Aorta (tissue), 5 donors: ENCODE measurements at regions of chr3 and their contacts with region 1.

Region 1: GRCh38 chr3:39288300-39288808 is 8.5 kb upstream of the CX3CR1 start:
- DNase-seq: peak; percentile 84 to 88
- ATAC-seq: peak; percentile 91
- H3K4me3 ChIP-seq: no peak overlapping the region
- H3K27ac ChIP-seq: no peak overlapping the region
- H3K4me1 ChIP-seq: no peaks in the 10 kb centered on the region
- H3K27me3 ChIP-seq: no peaks in the 10 kb centered on the region

Region 2: DNA sequence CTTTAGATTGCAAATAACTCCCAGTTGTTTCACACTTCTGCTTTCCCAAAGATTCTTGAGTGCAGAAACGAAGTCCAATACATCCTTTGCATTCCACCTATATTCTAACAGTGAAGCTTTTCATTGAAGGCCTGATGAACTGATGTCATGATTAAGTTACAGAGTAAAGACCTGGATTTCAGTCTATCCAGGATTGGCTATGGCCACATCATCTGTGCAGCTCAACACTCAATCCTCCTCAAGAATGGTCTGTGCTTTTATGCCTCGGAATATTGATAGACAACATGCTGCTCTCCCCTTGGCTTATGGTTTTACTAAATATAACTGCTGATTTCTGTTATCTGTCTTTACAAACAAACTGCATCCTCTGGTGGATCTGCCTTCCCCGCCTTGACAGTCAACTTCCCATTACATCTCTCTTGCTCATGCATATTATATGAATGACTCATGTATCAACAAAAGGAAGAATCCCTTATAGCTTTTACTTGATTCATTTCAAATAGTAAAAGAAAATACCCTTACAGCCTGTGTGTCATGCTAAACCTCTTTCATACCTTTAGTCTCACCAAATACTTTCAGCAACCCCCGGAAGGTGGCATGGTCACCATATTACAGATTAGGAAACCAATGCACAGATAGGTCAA is 296.1 kb before region 1 on chr3:
- intact Hi-C with region 1: no loop called
- DNase-seq: no peak
- ATAC-seq: no peak
- H3K4me3 ChIP-seq: no peak overlapping the region
- H3K27ac ChIP-seq: no peak overlapping the region
- H3K4me1 ChIP-seq: no peaks in the 10 kb centered on the region
- H3K27me3 ChIP-seq: no peaks in the 10 kb centered on the region

Region 3: GRCh38 chr3:39101022-39101689 is 187.2 kb before region 1 on chr3:
- intact Hi-C with region 1: loop called (anchors 5 kb)
- DNase-seq: no peak
- ATAC-seq: peak; percentile 38
- H3K4me3 ChIP-seq: no peak overlapping the region
- H3K27ac ChIP-seq: no peak overlapping the region
- H3K4me1 ChIP-seq: no peaks in the 10 kb centered on the region
- H3K27me3 ChIP-seq: no peaks in the 10 kb centered on the region

Region 4: GRCh38 chr3:39107388-39108199 is 180.8 kb before region 1 on chr3 and contains the starts of genes GORASP1 and TTC21A:
- intact Hi-C with region 1: loop called (anchors 5 kb)
- DNase-seq: peak; percentile 95 to 96
- ATAC-seq: peak; percentile 95
- H3K4me3 ChIP-seq: peak within 1 kb of the TSS; percentile 71 to 86
- H3K27ac ChIP-seq: peak within 1 kb of the TSS; percentile 50 to 51
- H3K4me1 ChIP-seq: no peaks in the 10 kb centered on the region
- H3K27me3 ChIP-seq: no peaks in the 10 kb centered on the region
- total RNA-seq, gene GORASP1: 52.3 to 62.2 TPM
- total RNA-seq, gene TTC21A: 3.6 to 11.6 TPM

Region 5: GRCh38 chr3:39126532-39127071 is 161.8 kb before region 1 on chr3:
- intact Hi-C with region 1: loop called (anchors 2 kb)
- DNase-seq: no peak
- ATAC-seq: peak; percentile 67
- H3K4me3 ChIP-seq: no peak overlapping the region
- H3K27ac ChIP-seq: peak overlapping the region in 1 of 2 donors; percentile 8
- H3K4me1 ChIP-seq: no peaks in the 10 kb centered on the region
- H3K27me3 ChIP-seq: no peaks in the 10 kb centered on the region

Region 6: DNA sequence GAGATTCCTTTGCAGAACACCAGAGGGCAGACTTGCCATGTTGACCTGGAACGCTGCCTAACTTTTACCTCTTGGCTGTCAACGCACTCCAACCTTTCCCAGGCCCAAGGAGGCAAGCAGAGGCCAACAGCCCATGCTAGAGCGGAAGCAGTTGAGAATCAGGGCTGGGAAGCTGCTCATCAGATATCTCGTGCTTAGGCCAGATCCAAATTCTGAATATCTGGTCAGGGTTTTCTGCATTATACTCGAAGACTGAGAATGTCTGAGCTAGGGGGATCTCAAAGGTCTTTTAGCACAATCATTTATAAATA is 98.4 kb before region 1 on chr3:
- intact Hi-C with region 1: loop called (anchors 2 to 5 kb)
- DNase-seq: no peak
- ATAC-seq: peak; percentile 72
- H3K4me3 ChIP-seq: no peak overlapping the region
- H3K27ac ChIP-seq: no peak overlapping the region
- H3K4me1 ChIP-seq: no peaks in the 10 kb centered on the region
- H3K27me3 ChIP-seq: no peaks in the 10 kb centered on the region

Region 7: DNA sequence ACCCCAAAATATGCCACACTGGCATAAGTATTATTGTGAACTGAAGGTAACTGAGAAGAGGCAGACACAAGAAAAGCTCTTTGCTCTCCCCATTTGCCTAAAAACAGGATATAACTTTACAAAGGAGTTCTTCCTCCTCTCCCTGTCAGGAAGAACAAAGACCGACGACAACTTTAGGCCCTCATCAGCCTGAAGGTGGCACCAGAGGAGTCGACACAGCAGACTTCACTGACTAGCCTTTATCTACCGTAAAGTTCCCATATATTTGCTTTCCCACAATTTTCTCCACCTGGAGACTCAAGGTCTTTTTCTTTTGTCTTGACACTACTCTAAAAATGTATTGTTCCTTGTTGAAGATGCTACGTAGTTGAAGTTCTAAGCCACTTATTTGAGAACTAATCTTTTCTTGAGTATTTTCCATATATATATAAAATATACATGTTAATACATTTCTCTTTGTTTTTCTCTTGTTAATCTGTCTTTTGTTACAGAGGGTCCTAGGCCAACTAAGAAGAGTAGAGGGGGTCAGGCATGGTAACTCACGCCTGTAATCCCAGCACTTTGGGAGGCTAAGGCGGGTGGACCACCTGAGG is 79.8 kb before region 1 on chr3:
- intact Hi-C with region 1: loop called in 1 of 2 experiments (anchors 1 kb)
- DNase-seq: peak; percentile 45 to 74
- ATAC-seq: peak; percentile 79
- H3K4me3 ChIP-seq: no peak overlapping the region
- H3K27ac ChIP-seq: no peak overlapping the region
- H3K4me1 ChIP-seq: no peaks in the 10 kb centered on the region
- H3K27me3 ChIP-seq: no peaks in the 10 kb centered on the region